Naive thymus-derived CD8-positive, alpha-beta T cell (primary cell): ENCODE measurements at regions of chr17 and their contacts with region 1.

Region 1: DNA sequence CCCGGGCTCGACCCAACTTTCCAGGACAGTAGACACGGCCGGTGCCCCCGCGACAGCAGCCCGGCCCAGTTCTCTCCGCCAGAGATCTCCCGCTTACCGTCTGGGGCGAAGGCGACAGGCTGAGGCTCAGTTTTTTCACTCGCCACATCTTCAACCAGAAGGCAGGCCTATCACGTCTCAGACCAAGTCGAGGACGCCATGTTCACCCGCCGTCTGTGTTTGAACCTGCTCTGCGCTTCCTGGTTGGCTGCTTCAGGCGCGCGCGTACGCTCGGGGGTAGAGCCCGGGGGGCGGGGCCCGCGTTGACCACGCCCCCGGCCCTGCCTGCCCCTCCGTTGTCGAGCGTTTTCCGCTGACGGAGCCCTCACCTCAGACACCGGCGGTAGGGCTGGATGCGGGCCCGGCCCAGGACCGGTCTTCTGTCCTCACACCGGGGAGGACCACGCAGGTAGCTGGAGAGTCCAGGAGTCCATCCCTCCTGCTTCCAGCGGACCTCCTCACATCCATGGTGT is at the start of gene SPAG5:
- DNase-seq: peak; percentile 90 to 97 (median 94)
- ATAC-seq: peak; percentile 93 to 94
- H3K4me3 Mint-ChIP-seq: peak within 1 kb of the TSS; percentile 89 to 99 (median 95)
- H3K27ac Mint-ChIP-seq: peak within 1 kb of the TSS; percentile 94 to 100 (median 96)
- H3K4me1 Mint-ChIP-seq: peaks cover 14 to 27% (median 23%) of the 10 kb centered on the region in 4 donors
- H3K27me3 Mint-ChIP-seq: no peaks in the 10 kb centered on the region
- polyA plus RNA-seq, gene SPAG5: 0.40 to 2.7 (median 0.81) TPM

Region 2: GRCh38 chr17:28552246-28552999 is 46.4 kb before region 1 on chr17 and contains the start of gene UNC119:
- POLR2A ChIA-PET with region 1: interaction called, 16 read pairs
- DNase-seq: peak; percentile 53 to 90 (median 76)
- ATAC-seq: peak; percentile 67 to 82
- H3K4me3 Mint-ChIP-seq: peak within 1 kb of the TSS; percentile 90 to 97 (median 91)
- H3K27ac Mint-ChIP-seq: peak within 1 kb of the TSS; percentile 71 to 97 (median 93)
- H3K4me1 Mint-ChIP-seq: peaks cover 43 to 62% (median 53%) of the 10 kb centered on the region in 4 donors
- H3K27me3 Mint-ChIP-seq: no peaks in the 10 kb centered on the region
- polyA plus RNA-seq, gene UNC119: 18.4 to 27.1 (median 26.6) TPM

Region 3: GRCh38 chr17:28571255-28572122 is 27.4 kb before region 1 on chr17 and contains the start of gene PIGS:
- POLR2A ChIA-PET with region 1: interaction called, 42 read pairs
- DNase-seq: peak; percentile 80 to 94 (median 85)
- ATAC-seq: peak; percentile 96 to 97
- H3K4me3 Mint-ChIP-seq: peak within 1 kb of the TSS; percentile 91 to 98 (median 95)
- H3K27ac Mint-ChIP-seq: peak within 1 kb of the TSS; percentile 88 to 98 (median 96)
- H3K4me1 Mint-ChIP-seq: peaks cover 41 to 72% (median 64%) of the 10 kb centered on the region in 4 donors
- H3K27me3 Mint-ChIP-seq: no peaks in the 10 kb centered on the region
- polyA plus RNA-seq, gene PIGS: 36.7 to 48.1 (median 42.0) TPM

Region 4: DNA sequence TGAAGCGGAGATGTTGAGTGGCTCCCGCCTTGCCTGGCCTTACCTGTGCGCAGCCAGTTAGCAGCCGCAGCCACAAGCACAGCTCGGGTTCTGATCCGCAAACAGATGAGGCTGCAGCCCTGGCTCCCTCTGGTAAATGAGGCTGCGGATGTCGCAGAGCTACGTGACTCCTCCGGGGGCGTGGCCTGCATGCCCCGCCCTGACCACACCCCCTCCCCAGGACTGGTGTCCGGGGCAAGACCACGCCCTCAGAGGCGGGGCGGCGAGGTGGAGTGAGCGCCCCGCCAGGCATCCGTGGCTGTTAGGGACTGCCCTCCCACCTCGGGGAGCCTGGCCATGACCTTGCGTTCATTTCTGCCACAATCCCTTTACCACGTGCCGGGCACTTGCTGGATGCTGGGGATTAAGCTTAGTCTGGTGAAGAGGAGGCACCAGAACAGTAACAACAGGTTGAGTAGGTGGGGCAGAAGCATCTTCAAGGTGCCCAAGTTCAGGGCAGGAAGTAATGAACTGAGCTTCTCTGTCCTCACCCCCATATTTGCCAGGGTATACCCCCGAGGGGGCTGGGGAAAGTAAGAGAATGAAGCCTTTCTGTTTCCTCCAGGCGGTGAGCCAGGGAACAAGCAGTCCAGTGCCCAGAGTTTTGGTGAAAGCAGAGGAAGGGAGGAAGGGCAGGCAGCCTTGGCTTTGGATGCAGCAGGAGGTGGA is 21.9 kb before region 1 on chr17 and contains the start of gene ALDOC:
- POLR2A ChIA-PET with region 1: interaction called, 42 read pairs
- DNase-seq: peak; percentile 90 to 100 (median 97)
- ATAC-seq: peak; percentile 94 to 97
- H3K4me3 Mint-ChIP-seq: peak within 1 kb of the TSS; percentile 77 to 91 (median 87)
- H3K27ac Mint-ChIP-seq: peak within 1 kb of the TSS; percentile 82 to 96 (median 94)
- H3K4me1 Mint-ChIP-seq: peaks cover 24 to 43% (median 31%) of the 10 kb centered on the region in 4 donors
- H3K27me3 Mint-ChIP-seq: no peaks in the 10 kb centered on the region
- polyA plus RNA-seq, gene ALDOC: 65.3 to 86.7 (median 78.9) TPM

Region 5: DNA sequence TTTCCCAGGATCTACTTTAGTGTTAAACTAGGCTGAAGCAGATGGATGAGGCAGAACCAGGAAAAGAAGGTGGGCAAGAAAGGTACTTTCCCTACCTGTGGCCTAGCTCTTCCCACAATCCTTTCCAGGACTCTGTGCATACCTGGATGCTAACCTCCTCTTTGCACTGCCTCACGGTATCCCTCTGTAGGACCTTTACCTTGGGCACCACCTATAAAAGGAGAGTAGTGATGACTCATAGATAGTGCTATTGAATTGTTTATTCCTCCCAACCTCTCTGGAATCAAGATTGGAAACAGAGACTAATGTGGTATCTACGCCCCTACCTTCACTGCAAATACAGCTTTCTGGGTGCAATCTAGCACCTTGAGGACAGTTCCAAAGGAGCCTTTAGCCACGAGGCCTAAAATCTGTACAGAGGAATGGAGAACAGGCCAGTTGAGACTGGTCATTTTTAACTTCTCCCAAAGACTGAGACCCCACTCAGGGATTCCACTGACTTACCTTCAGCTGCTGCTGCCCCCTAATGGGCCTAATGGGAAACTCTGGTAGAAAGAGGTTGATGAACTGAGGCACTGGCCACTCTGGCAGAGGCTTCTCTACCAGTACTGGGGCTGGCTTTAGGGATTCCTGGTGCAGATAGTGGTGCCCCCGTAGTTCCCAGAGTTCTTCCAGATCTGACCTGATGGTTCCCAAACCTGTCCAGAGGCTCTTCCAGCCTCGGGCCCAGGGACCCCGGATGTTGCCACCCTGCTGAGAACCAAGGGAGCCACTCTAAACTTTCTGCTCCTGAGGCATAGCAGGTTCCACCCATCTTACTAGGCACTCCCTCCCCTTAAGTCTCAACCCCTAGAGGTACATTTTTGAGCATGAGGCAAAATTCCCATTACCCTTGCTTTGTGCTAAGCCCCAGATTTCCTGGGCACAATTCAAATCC is 14.3 kb after region 1 on chr17:
- POLR2A ChIA-PET with region 1: interaction called, 13 read pairs
- DNase-seq: peak in 8 of 10 donors; percentile 7 to 71 (median 42)
- ATAC-seq: peak; percentile 50 to 57
- H3K4me3 Mint-ChIP-seq: no peak overlapping the region
- H3K27ac Mint-ChIP-seq: peak overlapping the region in 6 of 10 donors; percentile 5 to 74 (median 64)
- H3K4me1 Mint-ChIP-seq: peaks cover 0 to 18% (median 8%) of the 10 kb centered on the region in 4 donors
- H3K27me3 Mint-ChIP-seq: no peaks in the 10 kb centered on the region

Region 6: DNA sequence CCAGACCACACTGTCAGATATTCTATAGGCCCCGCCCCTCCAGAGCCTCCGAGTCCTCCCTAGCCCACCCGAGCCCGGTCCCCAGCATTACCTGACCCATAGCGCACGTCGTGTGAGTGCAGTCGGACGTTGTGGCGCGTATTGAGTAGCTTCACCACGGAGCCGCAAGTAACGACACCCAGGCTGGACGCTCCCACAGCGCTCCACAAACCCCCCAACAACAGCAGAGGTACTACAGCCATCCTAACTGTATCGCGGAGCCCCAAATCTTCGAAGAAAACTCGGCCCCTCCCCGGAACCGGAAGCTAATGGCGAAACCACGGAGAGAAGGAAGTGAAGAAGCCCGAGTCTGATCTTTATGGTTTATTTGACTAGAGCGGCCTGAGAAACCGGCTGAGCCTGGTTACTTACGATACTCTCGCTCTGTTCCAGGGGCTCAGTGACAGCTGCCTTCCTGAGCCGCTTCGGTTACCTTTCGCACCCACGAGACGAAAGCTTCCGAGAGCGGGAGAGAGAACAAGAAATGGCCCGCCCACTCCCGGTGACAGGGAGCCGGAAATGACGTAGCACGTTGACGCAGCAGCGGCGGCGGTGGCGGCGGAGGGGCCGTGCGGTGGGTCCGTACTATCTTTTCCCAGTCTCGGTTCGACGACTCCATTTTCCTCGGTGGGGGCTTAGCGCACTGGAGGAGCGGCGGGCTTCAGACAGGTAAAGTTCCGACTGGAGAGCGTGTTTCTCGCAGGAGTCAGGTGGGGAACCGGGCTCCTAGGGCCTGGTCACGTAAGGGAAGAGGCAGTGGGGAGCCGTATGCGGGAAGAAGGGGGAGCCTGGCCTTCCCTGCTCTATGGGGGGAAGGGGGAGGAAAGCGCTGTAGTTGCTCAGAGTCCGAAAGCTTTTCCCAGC is 63.0 kb after region 1 on chr17 and contains the starts of genes SDF2 and SUPT6H:
- POLR2A ChIA-PET with region 1: interaction called, 11 read pairs
- DNase-seq: peak; percentile 86 to 98 (median 94)
- ATAC-seq: peak; percentile 88 to 89
- H3K4me3 Mint-ChIP-seq: peak within 1 kb of the TSS; percentile 94 to 100 (median 100)
- H3K27ac Mint-ChIP-seq: peak within 1 kb of the TSS; percentile 99 to 100 (median 100)
- H3K4me1 Mint-ChIP-seq: peaks cover 30 to 70% (median 65%) of the 10 kb centered on the region in 4 donors
- H3K27me3 Mint-ChIP-seq: no peaks in the 10 kb centered on the region
- polyA plus RNA-seq, gene SDF2: 55.8 to 76.3 (median 59.0) TPM
- polyA plus RNA-seq, gene SUPT6H: 7.4 to 22.0 (median 10.0) TPM